Esophagus squamous epithelium (tissue), 5 donors: ENCODE measurements at regions of chr11 and their contacts with region 1.

Region 1: GRCh38 chr11:74611369-74611861 is 19.0 kb downstream of the POLD3 start:
- DNase-seq: no peak
- H3K4me3 ChIP-seq: no peak overlapping the region
- H3K27ac ChIP-seq: peak overlapping the region in 3 of 4 donors; percentile 63 to 65 (median 63)
- H3K4me1 ChIP-seq: peaks cover 0 to 21% (median 0%) of the 10 kb centered on the region in 3 donors
- H3K27me3 ChIP-seq: no peaks in the 10 kb centered on the region
- CTCF ChIP-seq: peak in 5 of 6 experiments; percentile 21 to 60 (median 36)
- POLR2A ChIP-seq: no peak

Region 2: GRCh38 chr11:74726547-74727182 is 115.2 kb after region 1 on chr11:
- intact Hi-C with region 1: loop called (anchors 10 kb)
- DNase-seq: no peak
- H3K4me3 ChIP-seq: no peak overlapping the region
- H3K27ac ChIP-seq: peak overlapping the region in 2 of 4 donors; percentile 23 to 51
- H3K4me1 ChIP-seq: peaks cover 0 to 42% (median 13%) of the 10 kb centered on the region in 3 donors
- H3K27me3 ChIP-seq: peaks cover 0 to 30% (median 5%) of the 10 kb centered on the region in 4 donors
- CTCF ChIP-seq: peak; percentile 67 to 91 (median 86)
- POLR2A ChIP-seq: no peak